Activated T-helper 2 cell treated with anti-CD3 and anti-CD28 coated beads, Interferon-gamma antibody, Interleukin-2, Interleukin-4, amounts not matched to agents 10 μg/mL and 5 μg/mL and 100 μg/mL, durations not matched to agents 14 hours and 24 hours and 36 hours (primary cell): ENCODE measurements at regions of chr6 and their contacts with region 1.

Region 1: DNA sequence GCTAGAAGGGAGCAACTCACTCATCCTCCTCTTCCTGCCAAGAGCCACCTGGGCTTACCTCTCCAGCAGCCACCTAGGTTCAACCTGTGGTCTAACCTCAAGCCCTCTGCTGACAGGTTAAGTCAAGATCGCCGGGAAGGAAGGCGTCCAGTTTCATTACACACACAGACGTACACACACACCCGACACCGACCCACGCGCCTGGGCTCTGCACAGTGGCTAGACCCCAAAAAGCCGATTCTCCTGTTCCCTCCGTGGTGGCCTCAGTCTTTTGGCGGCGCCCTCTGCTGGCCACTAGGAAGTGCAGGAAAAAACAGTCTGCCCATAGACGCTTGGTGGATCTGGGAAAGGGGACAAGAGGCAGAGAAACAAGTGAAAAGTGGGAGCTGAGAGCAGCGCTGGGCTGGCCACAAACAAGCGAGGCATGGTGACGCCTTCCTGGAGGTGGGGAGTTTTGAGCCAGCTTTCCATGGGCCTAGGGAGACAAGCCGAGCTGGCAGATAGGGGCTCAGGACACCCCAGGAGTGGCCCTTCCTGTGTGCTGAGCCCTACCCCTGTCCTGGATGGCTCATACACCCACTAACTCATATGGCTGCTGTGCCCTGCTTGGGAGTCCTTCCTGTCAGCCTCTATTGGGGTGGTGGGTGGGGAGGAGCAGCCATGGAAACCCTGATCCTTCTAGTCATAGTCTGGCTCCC is 52.7 kb downstream of the MRPL14 start:
- DNase-seq: peak; percentile 62
- H3K4me3 Mint-ChIP-seq: peak overlapping the region; percentile 83
- H3K27ac Mint-ChIP-seq: peak overlapping the region; percentile 90
- H3K4me1 Mint-ChIP-seq: peaks cover 23% of the 10 kb centered on the region
- H3K27me3 Mint-ChIP-seq: peaks cover 1% of the 10 kb centered on the region

Region 2: GRCh38 chr6:43667245-43668150 is 407.1 kb before region 1 on chr6:
- intact Hi-C with region 1: loop called (anchors 2 kb)
- DNase-seq: peak; percentile 71
- H3K4me3 Mint-ChIP-seq: no peak overlapping the region
- H3K27ac Mint-ChIP-seq: peak overlapping the region; percentile 40
- H3K4me1 Mint-ChIP-seq: peaks cover 35% of the 10 kb centered on the region
- H3K27me3 Mint-ChIP-seq: no peaks in the 10 kb centered on the region

Region 3: GRCh38 chr6:43769526-43770416 is 304.8 kb before region 1 on chr6 and contains the start of gene VEGFA:
- intact Hi-C with region 1: loop called (anchors 1 kb)
- DNase-seq: peak; percentile 84
- H3K4me3 Mint-ChIP-seq: peak within 1 kb of the TSS; percentile 93
- H3K27ac Mint-ChIP-seq: peak within 1 kb of the TSS; percentile 89
- H3K4me1 Mint-ChIP-seq: peaks cover 30% of the 10 kb centered on the region
- H3K27me3 Mint-ChIP-seq: peaks cover 1% of the 10 kb centered on the region
- total RNA-seq, gene VEGFA: 50.7 and 55.2 TPM in 2 replicates

Region 4: DNA sequence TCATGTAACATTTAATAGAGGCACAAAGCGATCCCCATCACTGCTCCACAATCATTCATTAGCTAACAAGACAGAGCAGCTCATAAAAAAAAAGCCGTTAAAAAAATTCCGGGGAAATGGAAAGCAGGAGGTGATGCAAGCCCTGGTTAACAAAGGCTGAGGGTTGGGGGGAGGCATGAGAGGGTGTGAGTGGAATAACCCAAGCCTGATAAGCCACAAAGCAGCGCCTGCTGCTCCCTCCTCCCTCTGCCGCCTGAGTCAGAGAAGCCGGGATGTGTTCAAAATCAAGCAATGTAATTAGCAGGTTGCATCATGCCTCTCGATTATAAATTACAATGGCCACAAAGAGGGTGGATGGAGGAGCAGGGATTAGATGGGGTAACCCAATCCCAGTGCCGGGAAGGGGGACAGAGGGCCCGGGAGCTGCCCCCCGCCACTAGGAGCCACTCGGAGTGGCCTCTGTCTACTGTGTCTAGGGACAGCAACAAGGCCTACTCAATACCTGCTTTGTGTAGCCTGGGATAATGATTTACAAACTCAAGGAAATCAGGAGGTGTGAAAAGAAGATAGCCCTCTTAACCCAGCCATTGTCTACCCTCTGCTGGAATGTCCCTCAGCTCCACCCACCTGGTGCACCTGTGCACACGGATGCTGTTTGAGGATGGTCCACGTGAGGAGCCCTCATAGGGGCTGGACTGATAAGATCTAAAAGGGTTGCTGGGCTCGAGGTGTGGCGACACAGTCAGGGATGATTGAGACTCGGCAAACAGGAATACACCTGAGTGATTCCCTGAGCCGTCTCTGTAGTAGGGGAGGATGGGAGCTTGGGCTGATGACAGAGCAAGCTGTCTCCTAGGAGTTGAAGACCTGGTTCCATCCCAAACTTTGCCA is 147.7 kb before region 1 on chr6:
- intact Hi-C with region 1: loop called (anchors 10 kb)
- DNase-seq: no peak
- H3K4me3 Mint-ChIP-seq: no peak overlapping the region
- H3K27ac Mint-ChIP-seq: no peak overlapping the region
- H3K4me1 Mint-ChIP-seq: peaks cover 12% of the 10 kb centered on the region
- H3K27me3 Mint-ChIP-seq: no peaks in the 10 kb centered on the region

Region 5: DNA sequence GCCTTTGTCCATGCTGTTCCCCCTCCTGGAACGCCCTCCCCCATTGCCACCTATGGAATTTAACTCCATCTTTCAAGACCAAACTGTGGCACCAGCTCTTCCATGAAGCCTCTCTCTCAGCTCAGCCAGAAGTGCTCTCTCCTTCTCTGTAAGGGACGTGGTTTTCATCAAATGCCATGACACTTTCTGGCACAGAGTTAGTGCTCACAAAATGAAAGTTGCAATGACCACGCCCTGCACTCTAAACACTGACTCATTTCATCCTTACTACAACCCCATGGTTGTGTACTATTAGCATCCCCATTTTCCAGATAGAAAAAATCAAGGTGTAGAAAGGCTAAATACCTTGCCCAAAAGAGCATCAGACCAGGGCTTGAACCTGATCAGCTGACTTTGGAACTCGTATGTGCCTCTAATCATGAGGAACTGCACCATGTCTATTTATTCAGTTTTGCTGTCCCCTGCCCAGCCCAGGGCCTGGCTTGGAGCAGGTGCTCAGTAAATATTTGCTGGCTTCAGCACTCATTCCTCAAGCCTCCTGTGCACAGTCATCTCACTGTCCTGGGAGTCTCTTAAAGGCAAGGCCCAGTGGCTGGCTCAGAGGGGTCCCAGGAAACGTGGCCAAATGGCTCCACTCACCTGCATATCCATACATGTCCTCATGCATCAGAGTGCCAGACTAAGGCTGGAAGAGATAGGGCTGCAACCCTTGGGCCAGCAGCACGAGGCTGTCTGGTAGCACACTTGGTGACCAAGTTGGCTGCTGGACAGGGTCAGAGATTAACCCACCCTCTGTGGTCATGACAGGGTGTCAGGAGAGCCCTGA is 25.2 kb before region 1 on chr6:
- intact Hi-C with region 1: loop called (anchors 2 kb)
- DNase-seq: peak; percentile 36
- H3K4me3 Mint-ChIP-seq: peak overlapping the region; percentile 38
- H3K27ac Mint-ChIP-seq: peak overlapping the region; percentile 90
- H3K4me1 Mint-ChIP-seq: peaks cover 25% of the 10 kb centered on the region
- H3K27me3 Mint-ChIP-seq: no peaks in the 10 kb centered on the region

Region 6: DNA sequence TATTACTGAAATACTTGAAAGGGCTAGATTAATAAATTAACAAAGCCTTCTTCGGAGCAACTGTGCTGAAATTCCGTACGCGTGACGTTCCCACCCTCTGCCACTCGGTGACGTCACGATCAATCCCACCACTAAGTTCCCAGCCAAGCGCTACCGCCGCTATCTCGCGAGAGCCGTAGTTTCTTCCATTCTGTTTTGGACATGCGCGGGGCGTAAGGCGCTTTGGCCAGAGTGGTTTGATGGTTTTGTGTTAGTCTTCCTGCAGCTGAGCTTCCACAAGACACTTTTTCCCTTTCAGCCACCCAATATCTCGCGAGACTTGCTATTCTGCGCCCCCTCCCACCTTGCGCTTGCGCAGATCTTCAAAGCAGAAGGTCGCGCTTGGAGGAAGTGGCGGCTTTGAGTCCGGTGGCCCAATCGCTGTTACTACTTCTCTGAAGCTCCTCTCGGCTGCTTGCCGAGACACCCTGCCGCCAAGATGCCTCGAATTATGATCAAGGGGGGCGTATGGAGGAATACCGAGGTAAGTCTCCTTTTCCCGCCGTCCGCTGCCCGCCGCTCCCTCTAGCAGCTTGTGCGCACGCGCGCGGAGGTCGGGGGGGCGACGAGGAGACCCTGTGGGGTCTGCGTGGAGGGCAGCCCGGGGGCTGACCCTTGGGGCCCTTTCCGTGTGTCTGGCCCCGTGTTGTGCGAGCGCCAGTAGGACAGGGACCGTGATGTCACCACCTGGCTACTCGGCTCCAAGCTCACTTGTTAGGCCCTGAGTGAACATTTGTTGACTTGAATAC is 313.0 kb after region 1 on chr6 and contains the start of gene CDC5L:
- intact Hi-C with region 1: no loop called
- DNase-seq: peak; percentile 94
- H3K4me3 Mint-ChIP-seq: peak within 1 kb of the TSS; percentile 96
- H3K27ac Mint-ChIP-seq: peak within 1 kb of the TSS; percentile 98
- H3K4me1 Mint-ChIP-seq: peaks cover 33% of the 10 kb centered on the region
- H3K27me3 Mint-ChIP-seq: peaks cover 17% of the 10 kb centered on the region
- total RNA-seq, gene CDC5L: 27.7 and 28.1 TPM in 2 replicates